ENCODE measurements at regions of chr3 and their contacts with region 1.

Region 1: GRCh38 chr3:36677331-36678007 is 86.9 kb downstream of the DCLK3 start:
- DNase-seq: peak; percentile 92
- H3K4me3 ChIP-seq: peak overlapping the region in 1 of 3 experiments; percentile 15
- H3K27ac ChIP-seq: peak overlapping the region; percentile 97
- H3K4me1 ChIP-seq: peaks cover 32% of the 10 kb centered on the region
- H3K27me3 ChIP-seq: no peaks in the 10 kb centered on the region
- CTCF ChIP-seq: peak; percentile 4 to 27

Region 2: GRCh38 chr3:36591959-36592358 is 85.5 kb before region 1 on chr3:
- CTCF ChIA-PET with region 1: no interaction called
- dilution Hi-C with region 1: loop called (anchors 5 kb)
- in situ Hi-C with region 1: no loop called
- intact Hi-C with region 1: no loop called
- DNase-seq: peak; percentile 16
- H3K4me3 ChIP-seq: no peak overlapping the region
- H3K27ac ChIP-seq: no peak overlapping the region
- H3K4me1 ChIP-seq: no peaks in the 10 kb centered on the region
- H3K27me3 ChIP-seq: no peaks in the 10 kb centered on the region
- CTCF ChIP-seq: peak in 1 of 2 donors; percentile 59

Region 3: DNA sequence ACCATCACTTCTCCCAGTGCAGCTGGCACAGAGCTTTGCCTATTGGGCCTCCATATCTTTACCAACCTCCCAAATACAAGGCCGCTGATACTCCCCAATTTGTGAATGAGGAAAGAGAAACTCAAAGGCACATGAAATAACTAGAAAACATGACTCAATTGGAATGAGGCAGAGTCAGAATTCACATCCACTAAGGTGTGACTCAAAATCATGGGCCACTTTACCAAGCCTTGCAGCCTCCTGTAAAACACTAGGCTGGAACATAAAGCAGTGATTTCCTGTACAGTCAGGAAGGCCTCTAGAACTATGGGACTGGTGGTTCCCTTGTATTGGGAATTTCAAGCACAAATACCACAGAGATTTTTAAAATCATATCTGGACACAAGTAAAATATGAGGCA is 41.7 kb before region 1 on chr3:
- CTCF ChIA-PET with region 1: no interaction called
- dilution Hi-C with region 1: no loop called
- in situ Hi-C with region 1: no loop called
- intact Hi-C with region 1: loop called (anchors 2 kb)
- DNase-seq: peak; percentile 86
- H3K4me3 ChIP-seq: no peak overlapping the region
- H3K27ac ChIP-seq: peak overlapping the region; percentile 8
- H3K4me1 ChIP-seq: no peaks in the 10 kb centered on the region
- H3K27me3 ChIP-seq: no peaks in the 10 kb centered on the region
- CTCF ChIP-seq: no peak

Region 4: DNA sequence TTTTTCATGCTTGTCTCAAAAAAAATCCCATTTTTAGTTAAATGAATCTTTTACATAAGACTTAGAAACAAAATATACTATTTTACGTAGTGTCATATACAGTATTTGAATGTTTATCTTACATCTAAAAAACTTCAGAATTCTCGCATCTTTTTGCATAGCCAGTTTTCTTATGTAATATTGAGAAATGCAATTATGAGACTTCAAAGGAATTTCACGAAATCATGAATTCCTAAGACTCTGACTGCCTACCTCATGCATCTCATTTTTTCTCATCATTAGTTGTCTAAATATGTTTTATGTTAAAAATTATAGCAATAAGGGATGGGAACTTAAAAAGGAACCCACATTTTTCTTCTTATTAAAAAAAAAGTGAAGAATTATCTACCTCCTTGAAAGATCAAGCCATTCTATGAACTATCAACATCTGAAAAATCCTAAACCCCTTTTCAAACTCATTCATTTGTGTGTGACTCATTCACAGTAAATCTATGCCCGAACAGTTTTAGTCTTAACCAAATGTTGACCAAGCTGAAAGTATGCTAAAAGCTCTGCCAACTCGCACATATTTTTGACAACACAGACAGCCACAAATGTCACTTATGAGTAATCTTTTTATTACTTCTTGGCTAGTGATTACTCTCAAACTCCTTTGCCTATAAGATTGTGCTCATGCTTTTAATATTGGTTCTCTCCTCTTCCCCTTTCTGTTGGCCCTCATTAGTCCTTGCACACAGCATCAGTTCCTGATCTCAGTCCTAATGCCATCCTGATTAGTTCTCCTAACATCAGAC is 29.0 kb before region 1 on chr3:
- CTCF ChIA-PET with region 1: no interaction called
- dilution Hi-C with region 1: no loop called
- in situ Hi-C with region 1: no loop called
- intact Hi-C with region 1: loop called (anchors 1 kb)
- DNase-seq: peak; percentile 85
- H3K4me3 ChIP-seq: no peak overlapping the region
- H3K27ac ChIP-seq: no peak overlapping the region
- H3K4me1 ChIP-seq: peaks cover 18% of the 10 kb centered on the region
- H3K27me3 ChIP-seq: no peaks in the 10 kb centered on the region
- CTCF ChIP-seq: no peak